HEK293 (cell line): ENCODE measurements at regions of chr19 and their contacts with region 1.

Region 1: DNA sequence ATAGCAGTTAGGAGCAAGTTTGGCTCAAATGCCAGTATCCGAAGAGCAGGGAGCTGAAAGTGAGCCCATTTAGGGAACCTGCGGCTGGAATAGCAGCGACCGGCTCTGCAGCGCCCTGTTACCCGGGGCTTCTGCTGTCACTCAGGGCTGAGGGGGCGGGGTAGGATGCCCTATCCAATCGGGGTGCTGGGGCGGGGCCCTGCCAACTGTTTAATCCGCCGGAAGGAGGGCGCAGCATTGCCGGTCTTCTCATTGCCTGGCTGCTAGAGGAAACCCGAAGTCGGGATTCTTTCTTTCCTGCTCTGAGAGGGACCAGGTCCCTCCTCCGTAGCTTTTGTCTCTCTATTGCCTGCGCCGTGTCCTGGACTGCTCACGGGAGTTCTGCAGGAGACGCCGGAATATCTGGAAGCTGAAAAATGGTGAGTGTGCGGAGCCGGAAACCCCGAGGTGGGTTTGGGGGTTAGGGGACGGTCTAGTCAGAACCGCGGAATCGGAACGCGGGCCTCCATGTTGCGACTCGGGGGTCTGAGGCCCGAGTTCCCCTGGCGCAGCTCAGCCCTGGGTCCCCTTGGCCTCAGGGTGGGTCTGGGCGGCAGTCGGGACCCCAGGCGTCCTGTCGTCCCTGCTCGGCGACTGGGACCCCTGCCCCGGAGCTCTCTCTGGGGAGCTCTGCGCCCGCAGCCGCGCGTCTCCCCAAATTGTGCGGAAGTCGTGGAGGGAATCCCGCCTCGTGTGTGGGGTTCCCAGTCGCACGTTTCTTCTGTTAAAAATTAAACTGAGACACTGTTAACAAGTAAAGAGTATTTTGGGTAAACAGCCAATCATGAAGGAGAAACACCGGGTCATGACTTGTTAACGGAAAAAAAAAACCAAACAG is 22.8 kb downstream of the ZNF763 start:
- H3K4me3 ChIP-seq: peak overlapping the region; percentile 86
- H3K27ac ChIP-seq: no peak overlapping the region
- H3K4me1 ChIP-seq: no peaks in the 10 kb centered on the region
- CTCF ChIP-seq: no peak

Region 2: GRCh38 chr19:11798391-11799330 is 189.0 kb before region 1 on chr19 and contains the start of gene ZNF491:
- CTCF ChIA-PET with region 1: interaction called, 23 read pairs
- POLR2A ChIA-PET with region 1: interaction called, 7 read pairs
- H3K4me3 ChIP-seq: peak within 1 kb of the TSS; percentile 55
- H3K27ac ChIP-seq: no peak within 1 kb of the TSS
- H3K4me1 ChIP-seq: no peaks in the 10 kb centered on the region
- CTCF ChIP-seq: no peak

Region 3: GRCh38 chr19:11924886-11925650 is 62.6 kb before region 1 on chr19 and contains the start of gene ZNF700:
- CTCF ChIA-PET with region 1: interaction called, 29 read pairs
- POLR2A ChIA-PET with region 1: interaction called, 8 read pairs
- H3K4me3 ChIP-seq: peak within 1 kb of the TSS; percentile 77
- H3K27ac ChIP-seq: peak within 1 kb of the TSS; percentile 33; the same call in 1 of the 2 replicates
- H3K4me1 ChIP-seq: no peaks in the 10 kb centered on the region
- CTCF ChIP-seq: no peak